ENCODE measurements at regions of chr17 and their contacts with region 1.

Region 1: GRCh38 chr17:56592487-56593085 is 913 bp upstream of the NOG start:
- DNase-seq: peak; percentile 61
- H3K4me3 ChIP-seq: peak overlapping the region; percentile 69 to 89 (median 74)
- H3K27ac ChIP-seq: no peak overlapping the region
- H3K4me1 ChIP-seq: peaks cover 14% of the 10 kb centered on the region
- H3K27me3 ChIP-seq: no peaks in the 10 kb centered on the region
- CTCF ChIP-seq: peak; percentile 66 to 70

Region 2: GRCh38 chr17:56457501-56457900 is 135.1 kb before region 1 on chr17:
- CTCF ChIA-PET with region 1: no interaction called
- dilution Hi-C with region 1: no loop called
- in situ Hi-C with region 1: no loop called
- intact Hi-C with region 1: no loop called
- DNase-seq: no peak
- H3K4me3 ChIP-seq: no peak overlapping the region
- H3K27ac ChIP-seq: no peak overlapping the region
- H3K4me1 ChIP-seq: no peaks in the 10 kb centered on the region
- H3K27me3 ChIP-seq: no peaks in the 10 kb centered on the region
- CTCF ChIP-seq: no peak

Region 3: GRCh38 chr17:56653877-56654276 is 61.3 kb after region 1 on chr17:
- CTCF ChIA-PET with region 1: no interaction called
- dilution Hi-C with region 1: no loop called
- in situ Hi-C with region 1: no loop called
- intact Hi-C with region 1: loop called (anchors 1 kb)
- DNase-seq: peak; percentile 75
- H3K4me3 ChIP-seq: no peak overlapping the region
- H3K27ac ChIP-seq: no peak overlapping the region
- H3K4me1 ChIP-seq: peaks cover 1% of the 10 kb centered on the region
- H3K27me3 ChIP-seq: no peaks in the 10 kb centered on the region
- CTCF ChIP-seq: peak; percentile 74 to 77

Region 4: DNA sequence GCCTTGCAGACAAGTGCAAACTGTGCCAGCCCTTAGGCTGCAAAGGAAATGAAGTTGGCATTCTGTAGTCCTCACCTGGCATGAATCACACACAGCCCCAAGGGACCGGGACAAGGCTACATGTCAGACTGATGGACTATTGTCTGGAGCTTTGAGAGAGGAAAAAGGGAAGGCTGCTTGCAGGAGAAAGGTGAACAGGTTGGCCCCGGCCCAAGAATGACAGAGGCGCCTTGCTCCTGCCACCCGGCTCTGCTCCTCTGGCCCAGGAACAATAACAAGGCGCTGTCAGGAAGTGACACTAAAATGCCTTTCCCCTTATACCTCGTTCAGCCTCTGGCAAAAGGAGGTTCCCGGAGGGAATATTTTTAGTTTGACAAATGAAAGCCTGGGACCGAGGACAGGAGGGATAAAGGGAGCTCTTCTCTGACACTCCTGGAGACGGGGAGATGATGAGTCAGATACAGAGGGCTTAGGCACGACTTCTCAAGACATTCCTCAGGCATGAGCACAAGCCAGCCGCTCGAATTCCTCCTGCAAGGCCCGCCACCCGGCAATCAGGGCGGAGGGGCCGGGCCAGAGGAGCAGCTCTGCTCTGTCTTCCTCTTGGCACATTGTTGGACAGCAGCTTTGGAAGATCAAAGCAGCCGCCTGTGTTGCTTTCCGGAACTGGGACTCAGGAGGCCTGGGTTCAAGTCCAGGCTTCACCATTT is 106.8 kb after region 1 on chr17:
- CTCF ChIA-PET with region 1: no interaction called
- dilution Hi-C with region 1: no loop called
- in situ Hi-C with region 1: no loop called
- intact Hi-C with region 1: loop called (anchors 1 kb)
- DNase-seq: peak; percentile 99
- H3K4me3 ChIP-seq: no peak overlapping the region
- H3K27ac ChIP-seq: peak overlapping the region; percentile 31
- H3K4me1 ChIP-seq: peaks cover 21% of the 10 kb centered on the region
- H3K27me3 ChIP-seq: no peaks in the 10 kb centered on the region
- CTCF ChIP-seq: no peak

Region 5: GRCh38 chr17:56779898-56780733 is 187.5 kb after region 1 on chr17:
- CTCF ChIA-PET with region 1: interaction called, 3 read pairs
- dilution Hi-C with region 1: no loop called
- in situ Hi-C with region 1: no loop called
- intact Hi-C with region 1: loop called (anchors 1 kb)
- DNase-seq: peak; percentile 78
- H3K4me3 ChIP-seq: peak overlapping the region in 2 of 3 experiments; percentile 32 to 35
- H3K27ac ChIP-seq: no peak overlapping the region
- H3K4me1 ChIP-seq: peaks cover 20% of the 10 kb centered on the region
- H3K27me3 ChIP-seq: no peaks in the 10 kb centered on the region
- CTCF ChIP-seq: peak; percentile 78 to 96

Region 6: GRCh38 chr17:56819431-56820145 is 227.0 kb after region 1 on chr17:
- CTCF ChIA-PET with region 1: interaction called, 12 read pairs
- dilution Hi-C with region 1: no loop called
- in situ Hi-C with region 1: no loop called
- intact Hi-C with region 1: no loop called
- DNase-seq: peak; percentile 74
- H3K4me3 ChIP-seq: no peak overlapping the region
- H3K27ac ChIP-seq: no peak overlapping the region
- H3K4me1 ChIP-seq: no peaks in the 10 kb centered on the region
- H3K27me3 ChIP-seq: no peaks in the 10 kb centered on the region
- CTCF ChIP-seq: peak; percentile 72 to 77

Region 7: DNA sequence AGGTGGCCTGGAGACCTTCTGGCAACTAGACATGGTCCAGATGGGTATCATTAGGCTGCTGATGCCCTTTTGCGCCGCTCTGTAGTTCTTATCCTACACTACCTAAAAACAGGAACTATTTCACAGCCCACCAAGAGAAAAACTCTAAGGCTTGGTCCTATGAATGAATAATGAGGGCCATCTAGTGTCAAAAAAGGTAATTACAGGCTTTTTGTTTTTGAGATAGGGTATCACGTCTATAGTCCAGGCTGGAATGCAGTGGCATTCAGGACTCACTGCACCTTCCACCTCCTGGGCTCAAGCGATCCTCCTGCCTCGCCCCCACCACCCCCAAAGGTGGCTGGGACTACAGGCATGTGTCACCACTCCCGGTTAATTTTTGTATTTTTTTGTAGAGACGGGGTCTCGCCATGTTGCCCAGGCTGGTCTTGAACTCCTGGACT is 347.3 kb after region 1 on chr17:
- CTCF ChIA-PET with region 1: no interaction called
- dilution Hi-C with region 1: no loop called
- in situ Hi-C with region 1: no loop called
- intact Hi-C with region 1: loop called (anchors 5 kb)
- DNase-seq: peak; percentile 32
- H3K4me3 ChIP-seq: no peak overlapping the region
- H3K27ac ChIP-seq: no peak overlapping the region
- H3K4me1 ChIP-seq: peaks cover 19% of the 10 kb centered on the region
- H3K27me3 ChIP-seq: no peaks in the 10 kb centered on the region
- CTCF ChIP-seq: peak; percentile 60 to 71

Measured in mammary epithelial cell (primary cell).